Esophagus muscularis mucosa (tissue), 4 donors: ENCODE measurements at regions of chr11 and their contacts with region 1.

Region 1: DNA sequence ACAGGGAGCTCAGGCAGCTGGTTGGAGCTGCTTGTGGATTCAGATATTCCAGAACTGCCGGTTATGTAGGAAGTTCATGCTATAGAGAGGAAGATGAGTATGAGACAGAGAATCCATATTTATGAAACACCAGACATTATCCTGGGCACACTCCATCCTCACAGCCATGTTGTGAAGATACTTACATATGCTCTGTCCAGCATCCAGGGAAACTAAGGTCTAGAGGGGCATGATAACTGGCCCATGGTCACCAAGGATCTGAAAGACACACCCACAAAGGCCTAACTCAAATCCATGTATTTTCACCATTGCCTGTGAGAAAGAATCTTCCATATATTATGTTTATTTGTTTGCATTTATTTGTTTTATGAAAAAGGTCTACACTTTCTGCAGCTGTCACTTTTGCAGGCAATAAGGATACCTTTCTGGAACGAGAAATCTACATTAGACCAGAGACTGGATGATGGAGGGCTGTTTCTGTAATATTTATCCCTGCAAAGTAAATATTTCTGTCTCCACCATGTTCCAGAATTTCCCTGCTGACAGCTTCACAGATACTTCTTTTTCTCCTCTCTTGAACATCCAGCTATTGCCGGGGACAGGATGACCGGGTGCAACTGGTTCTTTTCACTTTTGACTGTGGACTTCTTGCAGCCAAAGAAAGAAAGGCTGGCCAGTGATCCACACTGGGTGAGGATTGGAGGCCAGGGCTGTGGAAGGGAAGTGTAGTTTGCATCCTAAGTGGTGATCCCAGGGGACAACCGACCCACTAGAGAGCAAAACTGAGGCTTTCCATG is 145.9 kb upstream of the NAV2 start:
- DNase-seq: no peak
- H3K4me3 ChIP-seq: no peak overlapping the region
- H3K27ac ChIP-seq: peak overlapping the region; percentile 28 to 66 (median 40)
- H3K4me1 ChIP-seq: peaks cover 6 to 48% (median 45%) of the 10 kb centered on the region in 4 donors
- H3K27me3 ChIP-seq: no peaks in the 10 kb centered on the region
- CTCF ChIP-seq: no peak
- EP300 ChIP-seq: no peak
- POLR2A ChIP-seq: no peak

Region 2: GRCh38 chr11:19658344-19658743 is 91.6 kb after region 1 on chr11:
- intact Hi-C with region 1: loop called (anchors 5 kb)
- DNase-seq: no peak
- H3K4me3 ChIP-seq: no peak overlapping the region
- H3K27ac ChIP-seq: peak overlapping the region in 2 of 4 donors; percentile 69 to 71
- H3K4me1 ChIP-seq: peaks cover 5 to 15% (median 12%) of the 10 kb centered on the region in 4 donors
- H3K27me3 ChIP-seq: no peaks in the 10 kb centered on the region
- CTCF ChIP-seq: peak in 2 of 3 experiments; percentile 9 to 10
- EP300 ChIP-seq: no peak
- POLR2A ChIP-seq: no peak

Region 3: GRCh38 chr11:19742588-19743292 is 176.0 kb after region 1 on chr11:
- intact Hi-C with region 1: loop called (anchors 2 kb)
- DNase-seq: no peak
- H3K4me3 ChIP-seq: no peak overlapping the region
- H3K27ac ChIP-seq: peak overlapping the region in 1 of 4 donors; percentile 13
- H3K4me1 ChIP-seq: peaks cover 12 to 63% (median 43%) of the 10 kb centered on the region in 4 donors
- H3K27me3 ChIP-seq: no peaks in the 10 kb centered on the region
- CTCF ChIP-seq: peak; percentile 86 to 93 (median 91)
- EP300 ChIP-seq: no peak
- POLR2A ChIP-seq: no peak

Region 4: GRCh38 chr11:19903620-19904069 is 336.9 kb after region 1 on chr11:
- intact Hi-C with region 1: loop called (anchors 2 kb)
- DNase-seq: no peak
- H3K4me3 ChIP-seq: no peak overlapping the region
- H3K27ac ChIP-seq: peak overlapping the region in 1 of 4 donors; percentile 19
- H3K4me1 ChIP-seq: peaks cover 8 to 56% (median 44%) of the 10 kb centered on the region in 4 donors
- H3K27me3 ChIP-seq: no peaks in the 10 kb centered on the region
- CTCF ChIP-seq: peak; percentile 68 to 83 (median 72)
- EP300 ChIP-seq: no peak
- POLR2A ChIP-seq: no peak